ENCODE measurements at regions of chr11 and their contacts with region 1.

Region 1: GRCh38 chr11:10750838-10751580 is at the start of gene CTR9:
- DNase-seq: peak; percentile 95
- ATAC-seq: peak; percentile 92
- H3K4me3 ChIP-seq: peak within 1 kb of the TSS; percentile 77 to 96 (median 92)
- H3K4me3 Mint-ChIP-seq: peak within 1 kb of the TSS; percentile 95
- H3K27ac ChIP-seq: peak within 1 kb of the TSS; percentile 78 to 85
- H3K27ac Mint-ChIP-seq: peak within 1 kb of the TSS; percentile 91
- H3K4me1 ChIP-seq: peaks cover 8 to 12% of the 10 kb centered on the region in 2 donors
- H3K4me1 Mint-ChIP-seq: peaks cover 21% of the 10 kb centered on the region
- H3K27me3 ChIP-seq: no peaks in the 10 kb centered on the region
- H3K27me3 Mint-ChIP-seq: no peaks in the 10 kb centered on the region
- CTCF ChIP-seq: no peak
- total RNA-seq, gene CTR9: 46.7 and 52.0 TPM in 2 replicates

Region 2: DNA sequence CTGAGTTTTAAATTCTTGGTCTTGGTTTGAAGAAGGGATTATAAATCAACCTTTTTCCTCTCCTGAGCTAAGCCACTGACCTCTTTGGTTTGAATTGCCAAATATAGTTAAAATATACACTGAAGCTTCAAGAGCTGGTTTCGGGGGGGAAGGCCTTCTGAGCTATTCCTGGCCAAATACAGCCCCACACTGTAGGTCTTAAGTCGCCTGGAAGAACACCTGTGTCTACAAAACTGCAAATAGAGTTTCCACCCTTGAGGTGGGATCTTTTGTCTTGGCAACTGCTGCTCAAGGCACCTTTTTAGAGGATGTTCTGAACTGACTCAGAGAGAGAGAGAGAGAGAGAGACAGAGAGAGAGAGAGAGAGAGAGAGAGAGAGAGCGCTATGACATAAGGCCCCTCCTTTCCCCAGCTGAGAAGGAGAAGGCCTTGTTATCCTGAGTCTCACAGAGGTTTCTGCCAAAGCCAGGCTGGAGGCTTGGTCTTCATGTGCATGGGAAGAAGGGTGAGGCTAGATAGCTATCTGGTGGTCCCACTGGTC is 440.6 kb before region 1 on chr11:
- CTCF ChIA-PET with region 1: no interaction called
- POLR2A ChIA-PET with region 1: no interaction called
- intact Hi-C with region 1: no loop called
- DNase-seq: no peak
- ATAC-seq: no peak
- H3K4me3 ChIP-seq: no peak overlapping the region
- H3K4me3 Mint-ChIP-seq: no peak overlapping the region
- H3K27ac ChIP-seq: no peak overlapping the region
- H3K27ac Mint-ChIP-seq: no peak overlapping the region
- H3K4me1 ChIP-seq: peaks cover 32 to 37% of the 10 kb centered on the region in 2 donors
- H3K4me1 Mint-ChIP-seq: peaks cover 36% of the 10 kb centered on the region
- H3K27me3 ChIP-seq: peaks cover 0 to 27% (median 10%) of the 10 kb centered on the region in 4 experiments
- H3K27me3 Mint-ChIP-seq: peaks cover 22% of the 10 kb centered on the region
- CTCF ChIP-seq: no peak

Region 3: GRCh38 chr11:10450464-10451425 is 300.3 kb before region 1 on chr11:
- CTCF ChIA-PET with region 1: no interaction called
- POLR2A ChIA-PET with region 1: interaction called, 4 read pairs
- intact Hi-C with region 1: loop called (anchors 2 kb)
- DNase-seq: peak; percentile 75
- ATAC-seq: peak; percentile 56
- H3K4me3 ChIP-seq: peak overlapping the region; percentile 36 to 77 (median 62)
- H3K4me3 Mint-ChIP-seq: peak overlapping the region; percentile 98
- H3K27ac ChIP-seq: peak overlapping the region; percentile 77 to 84
- H3K27ac Mint-ChIP-seq: peak overlapping the region; percentile 98
- H3K4me1 ChIP-seq: peaks cover 36 to 44% of the 10 kb centered on the region in 2 donors
- H3K4me1 Mint-ChIP-seq: peaks cover 51% of the 10 kb centered on the region
- H3K27me3 ChIP-seq: no peaks in the 10 kb centered on the region
- H3K27me3 Mint-ChIP-seq: no peaks in the 10 kb centered on the region
- CTCF ChIP-seq: peak; percentile 49

Region 4: GRCh38 chr11:10762185-10762584 is 11.2 kb after region 1 on chr11:
- CTCF ChIA-PET with region 1: interaction called, 3 read pairs
- POLR2A ChIA-PET with region 1: interaction called, 5 read pairs
- intact Hi-C with region 1: loop called (anchors 1 kb)
- DNase-seq: peak; percentile 67
- ATAC-seq: peak; percentile 72
- H3K4me3 ChIP-seq: peak overlapping the region in 1 of 5 experiments; percentile 16
- H3K4me3 Mint-ChIP-seq: no peak overlapping the region
- H3K27ac ChIP-seq: peak overlapping the region; percentile 34 to 56
- H3K27ac Mint-ChIP-seq: peak overlapping the region; percentile 4
- H3K4me1 ChIP-seq: peaks cover 9 to 12% of the 10 kb centered on the region in 2 donors
- H3K4me1 Mint-ChIP-seq: peaks cover 25% of the 10 kb centered on the region
- H3K27me3 ChIP-seq: no peaks in the 10 kb centered on the region
- H3K27me3 Mint-ChIP-seq: no peaks in the 10 kb centered on the region
- CTCF ChIP-seq: peak; percentile 7

Region 5: DNA sequence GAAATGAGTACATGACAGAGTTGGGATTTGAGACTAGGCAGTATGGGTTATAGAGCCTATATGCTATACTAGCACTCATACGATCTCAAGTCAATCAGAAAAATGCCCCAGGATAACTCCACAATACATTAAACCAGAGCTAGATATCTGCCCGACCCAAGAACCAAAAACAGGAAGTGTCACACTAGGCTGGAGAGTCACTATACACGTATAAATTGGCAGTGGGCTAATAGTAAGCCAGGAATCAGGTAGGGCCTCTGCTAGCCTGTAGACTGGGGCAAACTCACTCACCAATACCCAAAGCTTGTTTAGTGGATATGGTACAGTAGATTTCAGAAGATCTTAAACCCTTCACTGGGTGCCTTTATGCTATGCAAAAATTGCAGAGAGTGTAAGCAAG is 73.9 kb after region 1 on chr11:
- CTCF ChIA-PET with region 1: no interaction called
- POLR2A ChIA-PET with region 1: no interaction called
- intact Hi-C with region 1: no loop called
- DNase-seq: peak; percentile 74
- ATAC-seq: peak; percentile 97
- H3K4me3 ChIP-seq: peak overlapping the region in 1 of 5 experiments; percentile 20
- H3K4me3 Mint-ChIP-seq: peak overlapping the region; percentile 70
- H3K27ac ChIP-seq: peak overlapping the region; percentile 49 to 71
- H3K27ac Mint-ChIP-seq: peak overlapping the region; percentile 89
- H3K4me1 ChIP-seq: peaks cover 21 to 24% of the 10 kb centered on the region in 2 donors
- H3K4me1 Mint-ChIP-seq: peaks cover 24% of the 10 kb centered on the region
- H3K27me3 ChIP-seq: no peaks in the 10 kb centered on the region
- H3K27me3 Mint-ChIP-seq: no peaks in the 10 kb centered on the region
- CTCF ChIP-seq: no peak

Measured in B cell (primary cell).